Dendritic cell treated with granulocyte-macrophage colony-stimulating factor and Interleukin-4, amounts not matched to agents 40 ng/mL and 50 ng/mL, for 4 days (primary cell): ENCODE measurements at regions of chr14 and their contacts with region 1.

Region 1: GRCh38 chr14:89681086-89682018 is 264.3 kb upstream of the FOXN3 start:
- H3K4me3 Mint-ChIP-seq: peak overlapping the region; percentile 55
- H3K27ac Mint-ChIP-seq: peak overlapping the region; percentile 83
- H3K4me1 Mint-ChIP-seq: peaks cover 35% of the 10 kb centered on the region
- H3K27me3 Mint-ChIP-seq: no peaks in the 10 kb centered on the region

Region 2: DNA sequence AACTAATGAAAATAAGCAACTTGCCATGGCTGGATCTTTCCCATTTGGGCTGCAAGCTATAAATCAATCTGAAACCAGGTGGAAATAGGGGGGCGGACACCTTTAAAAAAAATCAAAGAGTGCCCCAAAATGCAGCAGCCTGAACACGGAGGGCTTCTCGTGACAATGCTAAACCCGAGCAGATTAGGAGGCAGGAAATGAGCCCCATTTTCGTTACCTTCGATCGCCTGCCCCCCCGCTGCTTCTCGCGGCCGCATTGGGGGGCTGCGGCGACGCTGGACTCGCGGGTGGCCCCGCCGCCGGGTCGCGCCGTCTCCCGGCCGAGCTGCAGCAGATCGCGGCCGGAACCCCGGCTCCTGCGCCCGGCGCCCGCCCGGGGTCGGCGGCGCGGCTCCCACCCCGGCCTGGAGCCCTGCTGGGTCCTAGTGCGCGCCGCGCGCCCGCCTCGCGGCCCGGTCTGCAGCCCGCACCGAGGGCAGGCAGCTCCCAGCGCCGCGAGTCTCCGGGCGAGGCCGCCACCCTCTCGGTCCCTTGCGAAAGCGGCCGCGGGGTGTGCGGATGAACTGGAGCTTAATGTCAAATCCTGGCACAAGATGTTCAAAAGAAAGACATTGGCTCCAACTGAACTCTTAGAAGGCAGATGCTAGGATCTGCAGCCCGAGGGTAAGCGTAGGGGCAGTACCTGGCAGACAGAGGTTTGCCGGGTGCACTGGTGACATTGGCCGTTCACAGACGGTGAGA is 62.4 kb before region 1 on chr14:
- intact Hi-C with region 1: loop called (anchors 5 kb)
- H3K4me3 Mint-ChIP-seq: peak overlapping the region; percentile 83
- H3K27ac Mint-ChIP-seq: peak overlapping the region; percentile 80
- H3K4me1 Mint-ChIP-seq: peaks cover 46% of the 10 kb centered on the region
- H3K27me3 Mint-ChIP-seq: peaks cover 3% of the 10 kb centered on the region

Region 3: DNA sequence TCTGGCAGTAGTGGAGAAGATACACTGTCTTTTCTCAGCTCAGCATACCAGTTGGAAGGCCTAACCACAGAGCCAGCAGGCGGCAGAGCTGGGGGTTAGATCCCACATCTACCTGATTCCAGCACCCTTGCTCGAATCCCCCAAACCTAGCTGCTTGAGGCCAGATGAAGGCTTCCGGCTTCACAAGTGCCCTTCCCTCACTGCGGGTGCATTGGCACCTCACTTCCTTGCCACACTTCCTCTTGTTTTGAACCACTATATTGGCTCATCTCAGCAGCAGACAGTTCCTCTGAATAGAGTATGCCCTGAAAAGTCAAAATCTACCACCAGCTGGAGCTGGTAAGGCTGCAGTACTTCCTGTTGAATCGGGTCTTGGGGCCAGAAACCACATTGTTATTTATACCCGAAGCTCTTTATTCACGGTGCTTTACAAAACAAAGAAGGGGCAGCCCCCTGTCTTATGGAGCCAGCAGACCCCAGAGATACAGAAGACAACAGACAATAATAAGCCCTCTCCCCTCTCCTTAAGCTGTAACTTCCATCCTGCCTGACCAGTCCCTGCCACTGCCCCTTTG is 39.5 kb after region 1 on chr14:
- intact Hi-C with region 1: loop called (anchors 5 kb)
- H3K4me3 Mint-ChIP-seq: peak overlapping the region; percentile 14
- H3K27ac Mint-ChIP-seq: peak overlapping the region; percentile 94
- H3K4me1 Mint-ChIP-seq: peaks cover 76% of the 10 kb centered on the region
- H3K27me3 Mint-ChIP-seq: peaks cover 1% of the 10 kb centered on the region